CD8-positive, alpha-beta T cell (primary cell): ENCODE measurements at regions of chrX and their contacts with region 1.

Region 1: GRCh38 chrX:48028091-48028490 is 21.3 kb downstream of the SPACA5 start:
- DNase-seq: peak in 1 of 9 experiments; percentile 34
- ATAC-seq: no peak
- H3K4me3 ChIP-seq: no peak overlapping the region
- H3K4me3 Mint-ChIP-seq: no peak overlapping the region
- H3K27ac ChIP-seq: no peak overlapping the region
- H3K27ac Mint-ChIP-seq: no peak overlapping the region
- H3K4me1 ChIP-seq: no peaks in the 10 kb centered on the region
- H3K4me1 Mint-ChIP-seq: peaks cover 8% of the 10 kb centered on the region
- H3K27me3 ChIP-seq: no peaks in the 10 kb centered on the region
- H3K27me3 Mint-ChIP-seq: no peaks in the 10 kb centered on the region
- CTCF ChIP-seq: no peak

Region 2: DNA sequence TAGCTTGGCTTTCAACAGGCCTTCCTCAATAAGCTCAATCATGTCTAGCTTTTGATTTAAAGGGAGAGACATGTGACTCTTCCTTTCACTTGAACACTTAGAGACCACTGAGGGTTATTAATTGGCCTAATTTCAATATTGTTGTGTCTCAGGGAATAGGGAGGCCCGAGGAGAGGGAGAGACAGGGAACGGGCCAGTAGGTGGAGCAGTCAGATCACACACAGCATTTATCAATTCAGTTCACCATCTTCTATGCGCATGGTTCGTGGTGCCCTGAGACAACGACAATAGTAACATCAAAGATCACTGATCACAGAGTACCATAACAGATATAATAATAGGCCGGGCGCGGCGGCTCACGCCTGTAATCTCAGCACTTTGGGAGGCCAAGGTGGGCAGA is 173.6 kb before region 1 on chrX:
- CTCF ChIA-PET with region 1: interaction called, 25 read pairs
- POLR2A ChIA-PET with region 1: no interaction called
- intact Hi-C with region 1: loop called in 1 of 2 experiments (anchors 1 kb)
- DNase-seq: peak in 5 of 9 experiments; percentile 20 to 51 (median 25)
- ATAC-seq: no peak
- H3K4me3 ChIP-seq: no peak overlapping the region
- H3K4me3 Mint-ChIP-seq: no peak overlapping the region
- H3K27ac ChIP-seq: no peak overlapping the region
- H3K27ac Mint-ChIP-seq: no peak overlapping the region
- H3K4me1 ChIP-seq: no peaks in the 10 kb centered on the region
- H3K4me1 Mint-ChIP-seq: peaks cover 10% of the 10 kb centered on the region
- H3K27me3 ChIP-seq: no peaks in the 10 kb centered on the region
- H3K27me3 Mint-ChIP-seq: no peaks in the 10 kb centered on the region
- CTCF ChIP-seq: no peak

Region 3: DNA sequence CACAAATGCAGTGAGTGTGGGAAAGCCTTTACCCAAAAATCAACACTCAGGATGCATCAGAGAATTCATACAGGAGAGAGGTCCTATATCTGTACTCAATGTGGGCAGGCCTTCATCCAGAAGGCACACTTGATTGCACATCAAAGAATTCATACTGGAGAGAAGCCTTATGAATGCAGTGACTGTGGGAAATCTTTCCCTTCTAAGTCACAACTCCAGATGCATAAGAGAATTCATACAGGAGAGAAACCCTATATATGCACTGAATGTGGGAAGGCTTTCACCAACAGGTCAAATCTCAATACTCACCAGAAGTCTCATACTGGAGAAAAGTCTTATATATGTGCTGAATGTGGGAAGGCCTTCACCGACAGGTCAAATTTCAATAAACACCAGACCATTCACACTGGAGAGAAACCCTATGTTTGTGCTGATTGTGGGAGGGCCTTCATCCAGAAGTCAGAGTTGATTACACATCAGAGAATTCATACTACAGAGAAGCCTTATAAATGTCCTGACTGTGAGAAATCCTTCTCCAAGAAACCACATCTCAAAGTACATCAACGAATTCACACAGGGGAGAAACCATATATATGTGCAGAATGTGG is 112.1 kb before region 1 on chrX:
- CTCF ChIA-PET with region 1: no interaction called
- POLR2A ChIA-PET with region 1: no interaction called
- intact Hi-C with region 1: no loop called
- DNase-seq: no peak
- ATAC-seq: no peak
- H3K4me3 ChIP-seq: no peak overlapping the region
- H3K4me3 Mint-ChIP-seq: no peak overlapping the region
- H3K27ac ChIP-seq: no peak overlapping the region
- H3K27ac Mint-ChIP-seq: no peak overlapping the region
- H3K4me1 ChIP-seq: no peaks in the 10 kb centered on the region
- H3K4me1 Mint-ChIP-seq: no peaks in the 10 kb centered on the region
- H3K27me3 ChIP-seq: no peaks in the 10 kb centered on the region
- H3K27me3 Mint-ChIP-seq: no peaks in the 10 kb centered on the region
- CTCF ChIP-seq: no peak